ENCODE measurements at regions of chr3 and their contacts with region 1.

Region 1: DNA sequence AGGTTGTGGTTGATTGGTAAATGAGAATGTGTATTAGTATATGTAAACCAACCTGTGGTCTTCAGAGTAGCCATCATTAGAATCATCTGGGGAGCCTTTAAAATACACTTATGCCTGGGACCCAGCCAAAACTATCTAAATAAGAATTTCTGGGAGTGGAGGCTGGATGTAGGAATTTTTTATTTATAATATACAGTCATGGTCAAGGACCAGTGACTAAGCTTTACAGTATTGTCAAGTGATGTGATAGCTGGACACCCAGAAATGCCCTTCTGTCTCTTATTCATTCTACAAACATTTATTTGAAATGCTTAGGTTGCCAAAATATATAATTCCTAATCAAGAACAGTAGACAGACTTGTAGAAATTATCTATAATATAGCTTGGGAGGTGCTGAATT is 132.2 kb downstream of the MBNL1 start:
- H3K4me3 Mint-ChIP-seq: no peak overlapping the region
- H3K27ac Mint-ChIP-seq: no peak overlapping the region
- H3K4me1 Mint-ChIP-seq: peaks cover 40% of the 10 kb centered on the region
- H3K27me3 Mint-ChIP-seq: no peaks in the 10 kb centered on the region

Region 2: DNA sequence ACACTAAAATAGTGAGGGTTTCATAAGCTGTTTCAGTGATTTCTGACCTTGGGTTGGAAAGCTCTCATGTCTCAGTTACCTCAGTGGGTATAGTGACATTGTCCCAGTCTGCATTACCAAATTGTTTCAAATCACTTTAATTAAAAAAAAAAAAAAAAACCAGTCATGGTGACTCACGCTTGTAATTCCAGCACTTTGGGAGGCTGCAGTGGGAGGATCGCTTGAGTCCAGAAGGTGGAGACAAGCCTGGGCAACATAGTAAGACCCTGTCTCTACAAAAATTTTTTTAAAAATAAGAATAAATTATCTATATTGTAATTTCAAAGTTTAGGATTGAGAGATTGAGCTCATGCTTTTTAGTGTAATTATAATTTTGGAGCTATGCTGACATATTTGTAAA is 54.1 kb before region 1 on chr3:
- intact Hi-C with region 1: no loop called
- H3K4me3 Mint-ChIP-seq: no peak overlapping the region
- H3K27ac Mint-ChIP-seq: no peak overlapping the region
- H3K4me1 Mint-ChIP-seq: peaks cover 18% of the 10 kb centered on the region
- H3K27me3 Mint-ChIP-seq: no peaks in the 10 kb centered on the region

Region 3: DNA sequence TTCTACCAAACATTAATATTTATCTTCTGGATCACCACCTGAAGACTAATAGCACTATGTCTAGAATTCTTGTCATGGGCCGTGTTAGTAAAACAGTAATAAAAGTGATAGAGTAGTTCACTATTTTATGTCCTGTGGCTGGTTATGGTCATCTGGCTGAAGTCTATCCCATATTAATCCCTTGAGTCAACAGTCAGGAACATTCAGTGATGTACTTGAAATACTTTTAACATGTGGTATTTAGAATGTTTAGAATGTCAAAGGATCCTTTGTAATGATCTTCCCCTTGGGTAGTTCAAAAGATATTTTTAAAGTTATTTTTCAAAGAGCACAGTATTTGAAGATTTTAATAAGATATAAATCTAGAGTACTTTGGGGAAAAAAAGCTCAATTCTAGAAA is 15.1 kb before region 1 on chr3:
- intact Hi-C with region 1: loop called (anchors 2 kb)
- H3K4me3 Mint-ChIP-seq: no peak overlapping the region
- H3K27ac Mint-ChIP-seq: no peak overlapping the region
- H3K4me1 Mint-ChIP-seq: peaks cover 17% of the 10 kb centered on the region
- H3K27me3 Mint-ChIP-seq: no peaks in the 10 kb centered on the region

Measured in dendritic cell treated with granulocyte-macrophage colony-stimulating factor and Interleukin-4, amounts not matched to agents 40 ng/mL and 50 ng/mL, for 4 days (primary cell).